K562 (cell line): ENCODE measurements at regions of chr7 and their contacts with region 1.

Region 1: DNA sequence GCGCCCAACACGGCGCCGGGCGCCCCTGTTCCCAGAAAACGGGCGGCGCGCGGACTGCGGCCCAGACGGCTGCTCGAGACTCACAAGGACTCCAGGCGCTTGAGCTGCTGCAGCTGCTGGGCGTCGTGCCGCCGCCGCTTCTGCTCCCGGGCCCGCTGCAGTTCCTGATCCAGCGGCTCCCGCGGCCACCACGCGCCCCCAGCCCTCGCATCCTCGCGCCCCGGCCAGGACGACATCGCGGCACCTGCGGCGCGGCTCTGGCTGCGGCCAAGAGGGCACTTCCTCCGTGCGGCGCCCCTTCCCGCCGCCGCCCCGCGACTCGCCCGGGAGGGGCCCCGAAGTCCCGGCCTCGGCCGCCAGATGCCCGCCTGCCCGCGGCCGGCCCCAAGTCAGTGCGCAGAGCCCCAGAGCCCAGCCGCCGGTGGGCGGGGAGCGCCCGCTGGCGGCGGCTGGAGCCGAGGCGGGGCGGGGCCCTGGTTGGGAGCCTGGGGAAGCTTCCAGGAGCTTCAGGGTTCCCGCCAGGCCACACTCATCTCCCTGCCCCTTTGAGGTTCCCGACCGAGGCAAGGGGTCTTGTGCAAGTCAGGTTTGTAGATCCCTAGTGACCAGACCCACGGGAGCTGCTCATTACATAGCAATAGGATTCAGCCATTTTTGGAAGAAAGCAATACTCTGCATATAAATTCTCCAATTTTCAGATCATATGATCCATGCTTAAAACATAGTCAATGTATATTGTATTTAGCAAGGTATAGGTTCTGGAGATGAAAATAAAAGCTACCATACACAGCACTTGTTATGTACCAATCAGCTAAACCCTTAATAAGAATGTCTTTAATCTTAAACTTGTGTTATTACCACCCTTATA is 14.2 kb upstream of the FKBP9 start:
- DNase-seq: peak; percentile 87 to 90 (median 88)
- ATAC-seq: peak; percentile 93
- H3K4me3 ChIP-seq: peak overlapping the region; percentile 84
- H3K27ac ChIP-seq: peak overlapping the region; percentile 90
- H3K4me1 ChIP-seq: peaks cover 2 to 11% of the 10 kb centered on the region in 2 experiments; a peak in 3 of 5 replicates
- H3K27me3 ChIP-seq: no peaks in the 10 kb centered on the region
- CTCF ChIP-seq: peak; percentile 63 to 95 (median 80)
- EP300 ChIP-seq: no peak
- POLR2A ChIP-seq: no peak
- RAD21 ChIP-seq: peak; percentile 88 to 89

Region 2: GRCh38 chr7:32694182-32694581 is 248.8 kb before region 1 on chr7:
- CTCF ChIA-PET with region 1: no interaction called
- POLR2A ChIA-PET with region 1: no interaction called
- in situ Hi-C with region 1: no loop called
- intact Hi-C with region 1: loop called (anchors 5 kb)
- DNase-seq: no peak
- ATAC-seq: no peak
- H3K4me3 ChIP-seq: no peak overlapping the region
- H3K27ac ChIP-seq: no peak overlapping the region
- H3K4me1 ChIP-seq: peaks cover 0 to 6% of the 10 kb centered on the region in 2 experiments; a peak in 1 of 5 replicates
- H3K27me3 ChIP-seq: no peaks in the 10 kb centered on the region
- CTCF ChIP-seq: no peak
- EP300 ChIP-seq: no peak
- POLR2A ChIP-seq: no peak
- RAD21 ChIP-seq: no peak

Region 3: DNA sequence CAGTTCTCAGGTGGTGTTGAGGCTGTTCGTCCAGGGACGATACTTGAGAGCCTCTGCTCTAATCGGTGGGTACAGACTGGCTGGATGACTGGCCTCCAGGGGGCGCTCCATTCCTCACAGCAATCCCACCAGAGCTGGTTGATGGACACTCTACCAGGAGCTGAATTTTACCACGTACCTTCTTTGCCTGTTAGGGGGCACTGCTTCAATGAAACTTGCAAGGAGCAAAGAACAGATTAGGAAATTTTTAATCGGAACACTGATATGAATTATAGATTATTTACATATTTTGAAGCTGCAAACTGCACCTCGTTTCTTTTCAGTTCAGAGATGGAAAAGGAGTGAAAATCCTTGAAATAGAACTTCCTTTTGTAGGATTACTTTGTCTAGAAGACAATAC is 96.3 kb before region 1 on chr7:
- CTCF ChIA-PET with region 1: interaction called, 9 read pairs
- POLR2A ChIA-PET with region 1: interaction called, 3 read pairs
- in situ Hi-C with region 1: no loop called
- intact Hi-C with region 1: loop called (anchors 1 kb)
- DNase-seq: peak; percentile 66 to 90 (median 70)
- ATAC-seq: peak; percentile 100
- H3K4me3 ChIP-seq: no peak overlapping the region
- H3K27ac ChIP-seq: no peak overlapping the region
- H3K4me1 ChIP-seq: no peaks in the 10 kb centered on the region; a peak in 2 of 5 replicates
- H3K27me3 ChIP-seq: no peaks in the 10 kb centered on the region
- CTCF ChIP-seq: peak; percentile 88 to 96 (median 94)
- EP300 ChIP-seq: peak; percentile 34; the same call in 1 of the 2 replicates
- POLR2A ChIP-seq: no peak
- RAD21 ChIP-seq: peak; percentile 74 to 85

Region 4: GRCh38 chr7:32905175-32905662 is 37.8 kb before region 1 on chr7:
- CTCF ChIA-PET with region 1: no interaction called
- POLR2A ChIA-PET with region 1: interaction called, 3 read pairs
- in situ Hi-C with region 1: no loop called
- intact Hi-C with region 1: loop called (anchors 5 kb)
- DNase-seq: peak; percentile 81 to 98 (median 88)
- ATAC-seq: peak; percentile 95
- H3K4me3 ChIP-seq: peak overlapping the region; percentile 31
- H3K27ac ChIP-seq: peak overlapping the region; percentile 81
- H3K4me1 ChIP-seq: peaks cover 11 to 26% of the 10 kb centered on the region in 2 experiments
- H3K27me3 ChIP-seq: no peaks in the 10 kb centered on the region
- CTCF ChIP-seq: peak; percentile 20 to 32 (median 32); a peak in 3 of 6 replicates
- EP300 ChIP-seq: peak; percentile 61; the same call in 1 of the 2 replicates
- POLR2A ChIP-seq: peak; percentile 76
- RAD21 ChIP-seq: peak; percentile 10 to 34; a peak in 2 of 4 replicates

Region 5: GRCh38 chr7:33062782-33063443 is 119.9 kb after region 1 on chr7:
- CTCF ChIA-PET with region 1: no interaction called
- POLR2A ChIA-PET with region 1: no interaction called
- in situ Hi-C with region 1: no loop called
- intact Hi-C with region 1: loop called (anchors 5 kb)
- DNase-seq: peak; percentile 95 to 97 (median 96)
- ATAC-seq: peak; percentile 96
- H3K4me3 ChIP-seq: peak overlapping the region; percentile 90
- H3K27ac ChIP-seq: peak overlapping the region; percentile 94
- H3K4me1 ChIP-seq: peaks cover 7 to 20% of the 10 kb centered on the region in 2 experiments; a peak in 3 of 5 replicates
- H3K27me3 ChIP-seq: no peaks in the 10 kb centered on the region
- CTCF ChIP-seq: no peak
- EP300 ChIP-seq: no peak
- POLR2A ChIP-seq: peak; percentile 82
- RAD21 ChIP-seq: no peak

Region 6: GRCh38 chr7:33191340-33191739 is 248.3 kb after region 1 on chr7:
- CTCF ChIA-PET with region 1: no interaction called
- POLR2A ChIA-PET with region 1: no interaction called
- in situ Hi-C with region 1: no loop called
- intact Hi-C with region 1: no loop called
- DNase-seq: no peak
- ATAC-seq: peak; percentile 67
- H3K4me3 ChIP-seq: no peak overlapping the region
- H3K27ac ChIP-seq: no peak overlapping the region
- H3K4me1 ChIP-seq: no peaks in the 10 kb centered on the region
- H3K27me3 ChIP-seq: no peaks in the 10 kb centered on the region
- CTCF ChIP-seq: no peak
- EP300 ChIP-seq: no peak
- POLR2A ChIP-seq: no peak
- RAD21 ChIP-seq: no peak